Activated naive CD4-positive, alpha-beta T cell treated with anti-CD3 and anti-CD28 coated beads for 36 hours (primary cell): ENCODE measurements at regions of chr13 and their contacts with region 1.

Region 1: GRCh38 chr13:21106089-21106488 is 44.7 kb upstream of the LATS2 start:
- DNase-seq: no peak
- H3K4me3 Mint-ChIP-seq: no peak overlapping the region
- H3K27ac Mint-ChIP-seq: no peak overlapping the region
- H3K4me1 Mint-ChIP-seq: no peaks in the 10 kb centered on the region
- H3K27me3 Mint-ChIP-seq: no peaks in the 10 kb centered on the region

Region 2: DNA sequence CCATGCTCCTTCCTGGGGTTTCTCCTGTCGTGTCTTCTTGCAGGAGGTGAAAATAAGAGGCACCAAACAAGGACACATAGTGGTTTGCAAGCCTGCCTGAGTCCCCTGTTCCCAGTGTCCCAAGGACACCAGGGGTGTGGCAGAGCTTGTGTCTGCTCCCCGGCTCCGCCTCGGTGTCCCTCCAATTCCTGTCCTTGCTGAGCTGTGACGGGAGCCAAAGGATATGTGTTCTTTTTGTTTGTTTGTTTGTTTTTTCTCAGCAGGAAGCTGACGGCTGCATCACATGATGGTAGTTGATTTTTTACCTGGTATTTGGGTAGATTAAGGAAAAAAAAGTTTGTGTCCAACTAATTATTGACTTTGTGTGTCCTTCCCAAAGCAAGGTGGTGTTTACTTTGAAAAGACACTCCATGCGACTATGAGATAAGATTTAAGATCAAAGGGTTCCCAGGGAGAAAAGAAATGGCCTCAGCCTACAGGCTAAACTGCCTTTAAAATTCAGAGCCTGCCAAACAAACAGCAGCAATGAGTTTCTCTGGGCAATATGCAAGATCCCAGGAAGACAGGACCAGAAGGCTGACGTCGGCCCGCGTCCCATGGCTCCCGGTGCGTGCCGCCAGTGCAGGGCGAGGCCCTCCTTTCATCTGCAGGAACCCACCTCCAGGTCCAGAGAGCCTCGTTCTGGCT is 152.7 kb before region 1 on chr13:
- CTCF ChIA-PET with region 1: no interaction called
- intact Hi-C with region 1: no loop called
- DNase-seq: no peak
- H3K4me3 Mint-ChIP-seq: no peak overlapping the region
- H3K27ac Mint-ChIP-seq: no peak overlapping the region
- H3K4me1 Mint-ChIP-seq: no peaks in the 10 kb centered on the region
- H3K27me3 Mint-ChIP-seq: peaks cover 25% of the 10 kb centered on the region

Region 3: GRCh38 chr13:21089830-21090229 is 16.3 kb before region 1 on chr13:
- CTCF ChIA-PET with region 1: no interaction called
- intact Hi-C with region 1: loop called (anchors 1 kb)
- DNase-seq: no peak
- H3K4me3 Mint-ChIP-seq: no peak overlapping the region
- H3K27ac Mint-ChIP-seq: no peak overlapping the region
- H3K4me1 Mint-ChIP-seq: no peaks in the 10 kb centered on the region
- H3K27me3 Mint-ChIP-seq: no peaks in the 10 kb centered on the region